ENCODE measurements at regions of chr17 and their contacts with region 1.

Region 1: DNA sequence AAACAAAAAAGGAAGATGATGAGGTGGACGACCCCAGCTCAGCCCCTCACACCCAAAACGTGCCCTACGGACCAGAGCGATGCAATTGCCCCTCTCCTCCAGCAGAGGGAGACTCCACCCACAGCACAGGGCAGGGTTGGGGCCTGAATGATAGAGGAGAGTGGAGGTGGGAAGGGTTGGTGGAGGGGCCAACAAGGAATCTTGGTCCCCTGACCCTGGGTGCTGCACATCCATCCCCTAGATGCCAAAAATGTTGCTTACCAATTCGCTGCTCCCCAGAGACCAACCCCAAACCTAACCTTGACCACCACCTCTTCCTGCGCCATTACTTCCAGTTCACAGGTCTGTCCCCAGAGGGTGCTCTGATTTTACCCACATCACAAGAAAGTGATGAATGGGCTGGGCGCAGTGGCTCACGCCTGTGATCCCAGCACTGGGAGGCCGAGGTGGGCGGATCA is 12.9 kb downstream of the P2RX5 start:
- DNase-seq: peak; percentile 76
- ATAC-seq: peak; percentile 96
- H3K4me3 Mint-ChIP-seq: no peak overlapping the region
- H3K27ac Mint-ChIP-seq: peak overlapping the region; percentile 39
- H3K4me1 Mint-ChIP-seq: peaks cover 10% of the 10 kb centered on the region
- H3K27me3 Mint-ChIP-seq: no peaks in the 10 kb centered on the region

Region 2: DNA sequence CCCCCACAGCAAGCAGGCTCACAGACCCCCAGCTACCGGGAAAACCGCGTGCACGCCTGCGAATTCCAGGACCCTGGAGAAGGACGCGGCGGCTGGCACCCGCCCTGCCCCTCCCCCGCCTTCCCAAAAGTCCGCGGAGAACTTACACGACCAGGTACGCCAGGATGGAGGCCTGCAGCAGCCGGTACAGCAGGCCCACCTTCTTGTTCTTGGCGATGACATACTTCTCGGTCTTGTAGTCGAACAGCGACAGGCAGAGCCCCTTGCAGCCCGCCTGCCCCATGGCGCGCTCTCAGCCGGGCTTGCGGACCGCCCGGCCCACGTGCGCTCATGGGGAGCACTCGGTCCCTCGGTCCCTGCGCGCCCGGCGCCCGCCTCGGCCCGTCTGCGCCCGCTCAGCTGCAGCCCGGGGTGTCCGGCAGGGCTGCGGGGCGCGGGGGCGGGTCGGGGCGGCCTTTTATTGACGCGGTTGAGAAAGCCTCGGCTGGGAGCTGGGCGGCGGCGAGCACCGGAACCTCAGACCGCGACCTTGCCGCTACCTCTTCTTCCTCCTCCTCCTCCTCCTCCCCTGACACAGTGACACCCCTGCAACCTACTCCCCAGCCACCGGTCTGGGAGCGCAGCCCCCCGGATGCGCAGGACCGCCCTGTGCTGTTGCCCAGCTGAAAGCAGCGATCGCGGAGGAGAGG is 12.8 kb after region 1 on chr17 and contains the start of gene P2RX5:
- CTCF ChIA-PET with region 1: interaction called, 11 read pairs
- POLR2A ChIA-PET with region 1: no interaction called
- intact Hi-C with region 1: no loop called
- DNase-seq: peak; percentile 67
- ATAC-seq: peak; percentile 48
- H3K4me3 Mint-ChIP-seq: peak within 1 kb of the TSS; percentile 81
- H3K27ac Mint-ChIP-seq: peak within 1 kb of the TSS; percentile 94
- H3K4me1 Mint-ChIP-seq: peaks cover 15% of the 10 kb centered on the region
- H3K27me3 Mint-ChIP-seq: no peaks in the 10 kb centered on the region
- total RNA-seq, gene P2RX5: 69.7 to 77.5 TPM

Measured in activated CD4-positive, alpha-beta T cell treated with anti-CD3 and anti-CD28 coated beads for 36 hours (primary cell).